HEK293 (cell line): ENCODE measurements at regions of chr2 and their contacts with region 1.

Region 1: GRCh38 chr2:20378792-20379519 is 28.3 kb upstream of the PUM2 start:
- H3K4me3 ChIP-seq: no peak overlapping the region
- H3K27ac ChIP-seq: no peak overlapping the region
- H3K4me1 ChIP-seq: peaks cover 10% of the 10 kb centered on the region
- CTCF ChIP-seq: peak; percentile 92

Region 2: DNA sequence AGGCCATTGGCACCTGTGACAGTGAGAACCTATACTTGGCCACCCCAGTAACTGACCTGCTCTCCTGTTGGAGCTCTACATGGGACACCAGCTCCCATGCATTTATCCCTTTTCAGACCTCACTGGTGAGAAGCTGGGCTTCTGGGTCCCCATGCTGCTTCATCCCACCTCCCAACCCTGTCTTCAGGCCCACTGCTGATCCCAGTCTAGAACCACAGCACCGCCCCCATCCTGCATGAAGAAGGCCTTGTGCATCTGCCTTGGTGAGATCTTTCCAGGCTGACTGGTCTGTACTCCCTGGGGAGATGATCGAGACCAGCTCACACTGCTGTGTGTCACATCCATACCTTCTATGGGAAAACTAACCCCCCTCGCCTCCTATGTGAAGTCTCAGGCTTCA is 499.8 kb before region 1 on chr2:
- CTCF ChIA-PET with region 1: no interaction called
- POLR2A ChIA-PET with region 1: no interaction called
- H3K4me3 ChIP-seq: no peak overlapping the region
- H3K27ac ChIP-seq: no peak overlapping the region
- H3K4me1 ChIP-seq: no peaks in the 10 kb centered on the region
- CTCF ChIP-seq: no peak

Region 3: DNA sequence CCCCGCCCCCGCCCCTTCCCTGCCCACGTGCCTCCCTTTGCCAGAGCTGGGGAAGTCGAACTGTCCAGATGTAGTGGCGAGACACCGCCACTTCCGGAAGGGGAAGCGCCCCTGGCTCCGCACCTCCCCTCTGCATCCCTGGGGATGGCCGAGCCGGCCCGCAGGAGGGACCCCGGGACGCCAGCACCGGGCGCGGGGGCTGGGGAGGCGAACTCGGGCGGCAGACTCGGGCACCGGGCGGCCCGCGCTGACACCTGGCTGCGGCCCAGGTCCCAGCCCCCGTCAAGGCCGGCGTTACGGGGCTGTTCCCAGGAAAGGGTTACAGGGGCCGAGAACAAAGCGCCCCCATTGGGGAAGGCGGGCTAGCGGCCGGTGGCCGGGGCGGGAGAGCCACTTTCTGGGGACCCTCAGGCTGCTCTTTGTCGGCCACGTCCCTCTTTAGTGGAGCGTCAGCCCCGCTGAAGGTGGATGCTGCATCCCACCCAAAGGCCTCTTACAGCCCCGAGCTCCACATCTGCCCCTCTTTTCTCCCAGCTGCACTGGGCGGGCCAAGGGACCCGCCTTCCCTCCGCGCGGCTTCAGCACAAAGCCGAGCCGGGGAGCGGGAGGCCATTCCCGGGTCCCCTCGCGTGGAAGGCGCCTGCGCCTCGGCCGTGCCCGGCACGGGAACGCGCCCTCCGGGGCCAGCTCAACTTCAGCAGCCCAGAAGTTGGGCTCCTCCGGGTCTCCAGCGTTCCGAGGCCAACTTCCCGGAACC is 155.4 kb before region 1 on chr2:
- CTCF ChIA-PET with region 1: no interaction called
- POLR2A ChIA-PET with region 1: no interaction called
- H3K4me3 ChIP-seq: peak overlapping the region; percentile 60
- H3K27ac ChIP-seq: peak overlapping the region; percentile 82; the same call in 1 of the 2 replicates
- H3K4me1 ChIP-seq: peaks cover 14% of the 10 kb centered on the region
- CTCF ChIP-seq: peak; percentile 29; the same call in 1 of the 2 replicates

Region 4: GRCh38 chr2:20304411-20304810 is 74.5 kb before region 1 on chr2:
- CTCF ChIA-PET with region 1: no interaction called
- POLR2A ChIA-PET with region 1: no interaction called
- H3K4me3 ChIP-seq: no peak overlapping the region
- H3K27ac ChIP-seq: no peak overlapping the region
- H3K4me1 ChIP-seq: peaks cover 8% of the 10 kb centered on the region; the same call in 1 of the 2 replicates
- CTCF ChIP-seq: no peak

Region 5: GRCh38 chr2:20398956-20399567 is 20.1 kb after region 1 on chr2:
- CTCF ChIA-PET with region 1: interaction called, 13 read pairs
- POLR2A ChIA-PET with region 1: no interaction called
- H3K4me3 ChIP-seq: no peak overlapping the region
- H3K27ac ChIP-seq: no peak overlapping the region
- H3K4me1 ChIP-seq: no peaks in the 10 kb centered on the region
- CTCF ChIP-seq: no peak

Region 6: DNA sequence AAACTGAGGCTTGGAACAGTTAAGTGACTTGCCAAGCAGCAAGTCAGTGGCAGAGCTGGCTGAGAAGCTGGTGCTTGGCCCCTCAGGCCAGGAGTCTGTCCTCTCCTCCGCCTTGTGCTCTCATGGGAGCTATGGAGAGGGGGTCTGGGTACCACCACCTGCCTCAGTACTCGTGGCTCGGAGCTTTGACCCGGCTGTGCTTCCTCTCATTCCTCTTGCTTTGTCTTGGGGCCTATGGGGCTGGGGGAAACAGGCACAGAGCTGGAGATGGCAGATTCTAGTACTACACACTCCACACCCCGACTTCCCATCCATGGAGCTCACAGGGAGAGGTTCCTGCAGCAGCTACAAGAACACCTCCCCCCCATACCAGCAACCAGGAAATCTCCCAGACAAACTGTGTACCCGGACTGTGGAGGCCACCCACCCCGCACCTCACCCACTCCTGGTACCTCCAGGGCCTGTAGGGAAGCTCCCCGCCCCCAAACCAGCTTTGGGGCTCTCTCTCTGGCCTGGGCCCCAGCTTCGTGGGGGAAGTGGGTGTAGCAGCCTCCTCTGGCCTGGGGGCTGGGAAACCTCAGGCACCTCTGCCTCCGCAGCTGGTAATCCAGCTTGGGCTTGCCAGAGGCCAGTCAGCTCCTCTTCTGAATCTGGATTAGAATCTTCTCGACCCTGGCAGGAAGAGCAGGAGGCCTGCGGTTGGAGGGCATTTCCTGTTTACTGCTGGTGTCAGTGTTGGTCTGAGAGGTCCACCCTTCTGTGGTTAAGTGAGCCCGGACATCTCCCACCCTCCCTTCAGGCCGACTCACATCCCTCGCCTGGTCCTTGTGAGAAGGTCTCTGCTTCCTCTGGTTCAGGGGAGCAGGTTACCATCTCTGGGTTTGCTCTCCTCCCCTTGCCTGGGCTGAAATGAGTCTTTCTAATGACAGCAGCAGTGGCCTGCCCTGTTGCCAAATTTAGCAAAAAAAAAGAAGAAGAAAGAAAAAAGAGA is 45.6 kb after region 1 on chr2:
- CTCF ChIA-PET with region 1: interaction called, 10 read pairs
- POLR2A ChIA-PET with region 1: no interaction called
- H3K4me3 ChIP-seq: no peak overlapping the region
- H3K27ac ChIP-seq: no peak overlapping the region
- H3K4me1 ChIP-seq: no peaks in the 10 kb centered on the region
- CTCF ChIP-seq: no peak

Region 7: GRCh38 chr2:20438334-20439192 is 59.6 kb after region 1 on chr2:
- CTCF ChIA-PET with region 1: interaction called, 15 read pairs
- POLR2A ChIA-PET with region 1: no interaction called
- H3K4me3 ChIP-seq: peak overlapping the region; percentile 2
- H3K27ac ChIP-seq: no peak overlapping the region
- H3K4me1 ChIP-seq: 0 out of 2 replicates have a peak, but pooled peaks cover 2% of the 10 kb centered on the region
- CTCF ChIP-seq: no peak